ENCODE measurements at regions of chr5 and their contacts with region 1.

Region 1: GRCh38 chr5:154072414-154073171 is 33.8 kb downstream of the MFAP3 start:
- DNase-seq: peak; percentile 64
- ATAC-seq: peak; percentile 99
- H3K4me3 ChIP-seq: no peak overlapping the region
- H3K27ac ChIP-seq: no peak overlapping the region
- H3K4me1 ChIP-seq: no peaks in the 10 kb centered on the region
- H3K27me3 ChIP-seq: no peaks in the 10 kb centered on the region; the same call in none of the 2 replicates
- CTCF ChIP-seq: peak; percentile 97
- POLR2A ChIP-seq: peak; percentile 39; the same call in 1 of the 2 replicates
- RAD21 ChIP-seq: peak; percentile 99

Region 2: DNA sequence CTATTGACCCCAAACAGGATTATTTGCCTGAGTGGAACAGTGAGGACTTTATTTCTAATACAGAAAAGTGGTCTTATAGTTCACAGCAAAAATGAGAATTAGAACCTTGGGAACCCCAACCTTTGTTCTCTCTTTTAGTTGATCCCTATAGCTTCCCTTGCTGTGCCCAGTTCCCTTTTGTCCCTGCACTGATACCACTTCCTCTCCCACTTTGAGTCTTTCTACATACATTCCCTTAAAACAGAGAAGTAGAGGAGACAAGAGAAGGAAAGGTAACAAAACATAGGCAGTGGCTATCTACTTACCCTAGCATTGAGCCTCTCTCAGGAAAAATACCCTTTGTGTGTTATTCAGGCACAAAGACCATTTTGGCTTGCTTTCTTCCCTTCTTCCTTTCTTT is 280.3 kb before region 1 on chr5:
- CTCF ChIA-PET with region 1: no interaction called
- POLR2A ChIA-PET with region 1: no interaction called
- dilution Hi-C with region 1: no loop called
- in situ Hi-C with region 1: no loop called
- intact Hi-C with region 1: no loop called
- DNase-seq: no peak
- ATAC-seq: no peak
- H3K4me3 ChIP-seq: no peak overlapping the region
- H3K27ac ChIP-seq: no peak overlapping the region
- H3K4me1 ChIP-seq: no peaks in the 10 kb centered on the region
- H3K27me3 ChIP-seq: no peaks in the 10 kb centered on the region
- CTCF ChIP-seq: no peak
- POLR2A ChIP-seq: no peak
- RAD21 ChIP-seq: no peak

Region 3: DNA sequence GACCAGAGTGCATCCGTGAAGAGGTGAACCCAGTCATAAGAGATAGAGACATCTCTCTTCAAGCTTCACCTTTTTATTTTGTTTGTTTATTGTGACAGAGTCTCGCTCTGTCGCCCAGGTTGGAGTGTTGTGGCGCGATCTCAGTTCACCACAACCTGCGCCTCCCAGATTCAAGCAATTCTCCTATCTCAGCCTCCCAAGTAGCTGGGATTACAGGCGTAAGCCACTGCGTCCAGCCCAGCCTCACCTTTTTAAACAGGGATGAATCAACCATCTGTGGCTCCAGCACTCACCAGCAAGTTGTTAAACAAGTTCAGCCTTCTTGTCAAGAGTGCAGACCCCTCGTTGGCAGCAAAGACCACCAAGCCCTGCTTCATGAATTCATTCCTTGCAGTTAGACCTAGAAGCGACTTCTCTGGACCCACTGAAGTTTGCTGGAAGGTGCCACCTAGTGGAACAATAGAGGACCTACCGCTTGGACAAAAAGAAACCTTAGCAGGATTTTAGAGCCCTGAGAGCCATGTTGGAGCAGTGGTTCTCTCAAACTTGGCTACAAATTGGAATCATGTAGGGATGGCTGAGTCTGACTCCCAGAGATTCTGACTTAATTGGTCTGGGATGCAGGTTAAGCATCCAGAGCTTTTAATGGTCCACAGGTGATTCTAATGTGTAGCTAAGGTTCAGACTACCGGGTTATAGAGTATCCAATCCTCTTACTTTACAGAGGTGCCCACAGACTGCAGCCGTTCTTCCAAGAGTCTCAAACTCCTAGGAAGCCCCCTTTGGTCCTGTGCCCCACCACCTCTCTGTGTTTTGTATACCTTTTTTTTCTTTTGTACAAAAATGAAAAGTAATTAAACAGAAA is 107.5 kb after region 1 on chr5:
- CTCF ChIA-PET with region 1: interaction called, 17 read pairs
- POLR2A ChIA-PET with region 1: no interaction called
- dilution Hi-C with region 1: no loop called
- in situ Hi-C with region 1: loop called (anchors 5 kb)
- intact Hi-C with region 1: loop called (anchors 1 kb)
- DNase-seq: peak; percentile 67
- ATAC-seq: peak; percentile 97
- H3K4me3 ChIP-seq: no peak overlapping the region
- H3K27ac ChIP-seq: no peak overlapping the region
- H3K4me1 ChIP-seq: no peaks in the 10 kb centered on the region
- H3K27me3 ChIP-seq: peaks cover 23% of the 10 kb centered on the region
- CTCF ChIP-seq: peak; percentile 79
- POLR2A ChIP-seq: no peak
- RAD21 ChIP-seq: peak; percentile 64

Region 4: GRCh38 chr5:154189819-154190594 is 117.4 kb after region 1 on chr5:
- CTCF ChIA-PET with region 1: interaction called, 5 read pairs
- POLR2A ChIA-PET with region 1: no interaction called
- dilution Hi-C with region 1: no loop called
- in situ Hi-C with region 1: loop called (anchors 5 kb)
- intact Hi-C with region 1: no loop called
- DNase-seq: peak; percentile 66
- ATAC-seq: peak; percentile 90
- H3K4me3 ChIP-seq: peak overlapping the region; percentile 80
- H3K27ac ChIP-seq: peak overlapping the region; percentile 74
- H3K4me1 ChIP-seq: peaks cover 15% of the 10 kb centered on the region
- H3K27me3 ChIP-seq: no peaks in the 10 kb centered on the region
- CTCF ChIP-seq: peak; percentile 39
- POLR2A ChIP-seq: no peak
- RAD21 ChIP-seq: peak; percentile 26

Region 5: GRCh38 chr5:154405078-154405792 is 332.6 kb after region 1 on chr5:
- CTCF ChIA-PET with region 1: interaction called, 21 read pairs
- POLR2A ChIA-PET with region 1: no interaction called
- dilution Hi-C with region 1: no loop called
- in situ Hi-C with region 1: loop called (anchors 5 kb)
- intact Hi-C with region 1: loop called (anchors 1 kb)
- DNase-seq: peak; percentile 68
- ATAC-seq: peak; percentile 98
- H3K4me3 ChIP-seq: peak overlapping the region; percentile 23; the same call in 1 of the 2 replicates
- H3K27ac ChIP-seq: peak overlapping the region; percentile 28; the same call in 1 of the 2 replicates
- H3K4me1 ChIP-seq: peaks cover 3% of the 10 kb centered on the region; the same call in 1 of the 2 replicates
- H3K27me3 ChIP-seq: no peaks in the 10 kb centered on the region
- CTCF ChIP-seq: peak; percentile 91
- POLR2A ChIP-seq: peak; percentile 44; the same call in 1 of the 2 replicates
- RAD21 ChIP-seq: peak; percentile 97

Region 6: GRCh38 chr5:154445422-154446182 is 373.0 kb after region 1 on chr5 and contains the start of gene SAP30L:
- CTCF ChIA-PET with region 1: interaction called, 4 read pairs
- POLR2A ChIA-PET with region 1: no interaction called
- dilution Hi-C with region 1: no loop called
- in situ Hi-C with region 1: no loop called
- intact Hi-C with region 1: loop called (anchors 1 kb)
- DNase-seq: peak; percentile 89
- ATAC-seq: peak; percentile 93
- H3K4me3 ChIP-seq: peak within 1 kb of the TSS; percentile 97
- H3K27ac ChIP-seq: peak within 1 kb of the TSS; percentile 84
- H3K4me1 ChIP-seq: peaks cover 7% of the 10 kb centered on the region
- H3K27me3 ChIP-seq: no peaks in the 10 kb centered on the region
- CTCF ChIP-seq: no peak
- POLR2A ChIP-seq: peak; percentile 54; the same call in 1 of the 2 replicates
- RAD21 ChIP-seq: no peak
- total RNA-seq, gene SAP30L: 9.7 and 13.1 TPM in 2 replicates

Region 7: DNA sequence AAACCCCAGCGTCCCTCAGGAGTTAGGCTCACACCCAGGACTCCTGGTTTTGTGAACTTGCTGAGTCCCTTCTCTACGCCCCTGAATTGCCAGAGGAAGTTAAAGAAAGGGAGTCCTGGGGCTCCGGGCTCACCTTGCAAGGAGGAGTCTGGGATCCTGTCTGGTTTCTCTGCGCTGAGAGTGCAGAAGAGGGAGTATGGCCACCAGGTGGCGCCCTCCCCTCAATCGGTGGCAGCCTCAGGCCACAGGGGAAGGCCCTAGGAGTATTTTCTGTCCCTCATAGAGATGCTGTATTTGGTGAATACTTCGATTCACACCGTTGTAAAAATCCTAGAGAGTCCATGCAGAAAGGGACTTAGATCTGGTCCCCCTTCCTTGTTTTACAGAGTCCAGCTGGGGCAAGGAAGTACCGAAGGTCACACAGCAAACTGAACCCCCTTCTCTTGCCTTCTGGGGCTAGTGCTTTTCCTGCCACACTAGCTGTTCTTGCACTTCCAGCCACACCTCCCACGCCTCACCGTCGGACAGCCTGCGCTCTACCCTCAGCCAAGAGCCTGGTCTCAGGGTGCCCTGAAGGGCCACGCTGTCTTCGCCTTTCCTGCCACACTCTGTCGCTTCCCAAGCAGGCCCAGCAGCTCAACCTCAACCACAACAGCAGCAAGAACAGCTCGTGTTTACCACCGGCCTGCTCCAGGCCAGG is 395.2 kb after region 1 on chr5:
- CTCF ChIA-PET with region 1: interaction called, 4 read pairs
- POLR2A ChIA-PET with region 1: no interaction called
- dilution Hi-C with region 1: no loop called
- in situ Hi-C with region 1: no loop called
- intact Hi-C with region 1: loop called (anchors 5 kb)
- DNase-seq: peak; percentile 53
- ATAC-seq: peak; percentile 92
- H3K4me3 ChIP-seq: no peak overlapping the region
- H3K27ac ChIP-seq: no peak overlapping the region
- H3K4me1 ChIP-seq: peaks cover 2% of the 10 kb centered on the region; the same call in 1 of the 2 replicates
- H3K27me3 ChIP-seq: peaks cover 30% of the 10 kb centered on the region
- CTCF ChIP-seq: peak; percentile 85
- POLR2A ChIP-seq: no peak
- RAD21 ChIP-seq: peak; percentile 76

Region 8: GRCh38 chr5:154610321-154611154 is 537.9 kb after region 1 on chr5:
- CTCF ChIA-PET with region 1: no interaction called
- POLR2A ChIA-PET with region 1: no interaction called
- dilution Hi-C with region 1: no loop called
- in situ Hi-C with region 1: loop called (anchors 10 kb)
- intact Hi-C with region 1: loop called (anchors 1 kb)
- DNase-seq: peak; percentile 59
- ATAC-seq: peak; percentile 99
- H3K4me3 ChIP-seq: peak overlapping the region; percentile 4; the same call in 1 of the 2 replicates
- H3K27ac ChIP-seq: no peak overlapping the region
- H3K4me1 ChIP-seq: peaks cover 3% of the 10 kb centered on the region; the same call in 1 of the 2 replicates
- H3K27me3 ChIP-seq: peaks cover 60% of the 10 kb centered on the region
- CTCF ChIP-seq: peak; percentile 96
- POLR2A ChIP-seq: peak; percentile 39; the same call in 1 of the 2 replicates
- RAD21 ChIP-seq: peak; percentile 99

Measured in IMR-90 (cell line).